ENCODE measurements at regions of chrX and their contacts with region 1.

Region 1: GRCh38 chrX:68989865-68990606 is 161.2 kb downstream of the EFNB1 start:
- H3K4me3 ChIP-seq: no peak overlapping the region
- H3K27ac ChIP-seq: no peak overlapping the region; the same call in 1 of the 2 replicates
- H3K4me1 ChIP-seq: no peaks in the 10 kb centered on the region
- CTCF ChIP-seq: no peak

Region 2: DNA sequence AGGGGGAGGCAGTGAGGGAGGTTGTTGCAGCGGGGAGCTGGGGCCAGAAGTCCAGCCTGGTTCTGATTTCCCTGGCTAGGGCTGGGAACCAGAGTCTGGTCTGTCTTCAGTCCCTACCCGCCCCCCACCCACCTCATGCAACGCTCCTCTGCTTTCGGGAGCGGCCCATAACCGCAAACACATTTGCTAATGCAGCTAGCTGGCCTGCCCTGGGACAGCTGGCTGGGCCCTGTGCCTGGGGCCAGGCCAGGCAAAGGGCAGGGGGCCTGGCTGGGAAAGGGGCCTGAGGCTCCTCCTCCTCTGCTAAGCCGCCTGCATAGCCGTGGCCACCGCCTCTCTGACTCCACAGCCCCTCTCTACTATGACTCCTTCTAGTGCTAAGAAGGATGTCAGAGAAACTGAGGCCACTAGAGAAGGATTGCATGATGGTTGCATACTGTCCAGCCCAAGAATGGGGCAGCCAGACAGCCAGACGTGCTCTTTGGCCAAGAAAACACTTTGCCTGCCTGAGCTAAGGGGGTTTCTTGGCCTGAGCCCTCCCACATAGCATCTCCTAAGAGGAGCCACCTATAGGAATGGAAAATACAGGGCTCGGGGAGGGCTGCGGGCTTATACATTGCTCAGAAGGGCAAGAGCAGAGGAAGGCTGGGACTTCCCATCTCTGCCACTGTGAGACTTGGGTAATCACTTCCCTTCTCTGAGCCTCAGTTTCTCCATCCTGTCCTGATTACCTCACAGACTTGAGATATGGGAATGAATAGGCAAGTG is 98.3 kb after region 1 on chrX:
- CTCF ChIA-PET with region 1: no interaction called
- POLR2A ChIA-PET with region 1: interaction called, 10 read pairs
- H3K4me3 ChIP-seq: no peak overlapping the region
- H3K27ac ChIP-seq: no peak overlapping the region
- H3K4me1 ChIP-seq: no peaks in the 10 kb centered on the region
- CTCF ChIP-seq: no peak